Head of caudate nucleus (tissue), 42 donors: ENCODE measurements at regions of chr6 and their contacts with region 1.

Region 1: GRCh38 chr6:96015518-96016333 is at the start of gene FUT9:
- DNase-seq: peak; percentile 73 to 97 (median 90)

Region 2: DNA sequence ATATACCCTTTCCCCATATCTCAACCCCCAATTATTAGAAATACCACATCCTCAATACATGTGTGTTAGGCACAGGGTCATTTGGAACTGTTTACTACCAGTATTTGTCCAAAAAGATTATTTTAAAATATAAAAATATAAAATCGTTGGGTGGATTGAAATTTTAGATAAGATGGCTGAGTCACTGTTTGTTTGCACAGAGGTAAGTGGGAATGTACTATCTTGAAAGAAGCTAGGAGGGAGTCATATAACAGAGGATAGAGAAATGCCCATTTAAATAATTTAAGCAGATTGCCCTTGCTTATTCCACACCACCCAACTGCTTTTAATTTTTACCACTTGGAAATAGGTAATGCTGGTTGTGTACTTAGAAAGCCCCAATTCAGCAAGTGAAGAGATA is 127.9 kb after region 1 on chr6:
- intact Hi-C with region 1: loop called (anchors 10 kb)
- DNase-seq: no peak